ENCODE measurements at regions of chr17 and their contacts with region 1.

Region 1: GRCh38 chr17:70622368-70623260 is 453.3 kb downstream of the KCNJ2 start:
- DNase-seq: peak; percentile 56
- ATAC-seq: no peak
- H3K4me3 Mint-ChIP-seq: no peak overlapping the region
- H3K27ac Mint-ChIP-seq: no peak overlapping the region
- H3K4me1 Mint-ChIP-seq: peaks cover 4% of the 10 kb centered on the region
- H3K27me3 Mint-ChIP-seq: no peaks in the 10 kb centered on the region

Region 2: DNA sequence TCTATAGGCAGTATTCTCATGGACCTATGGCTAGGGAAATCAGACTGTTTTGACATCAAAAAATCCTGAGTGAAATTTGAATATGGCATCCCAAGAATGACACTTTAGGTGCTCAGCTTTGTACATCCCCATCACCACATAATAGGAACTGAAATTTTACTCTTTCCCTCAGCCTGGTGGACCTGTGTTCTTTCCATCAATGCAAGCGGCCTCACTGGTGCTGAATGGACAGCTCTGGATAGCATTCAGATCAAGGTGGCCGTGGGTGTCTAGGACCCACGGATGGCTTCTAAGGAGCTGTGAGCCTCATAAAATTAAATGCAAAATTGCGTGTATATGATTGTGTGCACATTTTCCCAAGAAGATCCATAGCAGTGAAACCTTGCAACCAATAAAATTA is 1055.5 kb before region 1 on chr17:
- CTCF ChIA-PET with region 1: no interaction called
- POLR2A ChIA-PET with region 1: no interaction called
- intact Hi-C with region 1: loop called (anchors 2 to 5 kb)
- DNase-seq: peak; percentile 7
- ATAC-seq: no peak
- H3K4me3 Mint-ChIP-seq: no peak overlapping the region
- H3K27ac Mint-ChIP-seq: no peak overlapping the region
- H3K4me1 Mint-ChIP-seq: peaks cover 3% of the 10 kb centered on the region
- H3K27me3 Mint-ChIP-seq: peaks cover 8% of the 10 kb centered on the region

Region 3: GRCh38 chr17:69574257-69575197 is 1048.1 kb before region 1 on chr17:
- CTCF ChIA-PET with region 1: no interaction called
- POLR2A ChIA-PET with region 1: no interaction called
- intact Hi-C with region 1: loop called (anchors 2 to 5 kb)
- DNase-seq: no peak
- ATAC-seq: no peak
- H3K4me3 Mint-ChIP-seq: no peak overlapping the region
- H3K27ac Mint-ChIP-seq: no peak overlapping the region
- H3K4me1 Mint-ChIP-seq: no peaks in the 10 kb centered on the region
- H3K27me3 Mint-ChIP-seq: peaks cover 16% of the 10 kb centered on the region

Region 4: DNA sequence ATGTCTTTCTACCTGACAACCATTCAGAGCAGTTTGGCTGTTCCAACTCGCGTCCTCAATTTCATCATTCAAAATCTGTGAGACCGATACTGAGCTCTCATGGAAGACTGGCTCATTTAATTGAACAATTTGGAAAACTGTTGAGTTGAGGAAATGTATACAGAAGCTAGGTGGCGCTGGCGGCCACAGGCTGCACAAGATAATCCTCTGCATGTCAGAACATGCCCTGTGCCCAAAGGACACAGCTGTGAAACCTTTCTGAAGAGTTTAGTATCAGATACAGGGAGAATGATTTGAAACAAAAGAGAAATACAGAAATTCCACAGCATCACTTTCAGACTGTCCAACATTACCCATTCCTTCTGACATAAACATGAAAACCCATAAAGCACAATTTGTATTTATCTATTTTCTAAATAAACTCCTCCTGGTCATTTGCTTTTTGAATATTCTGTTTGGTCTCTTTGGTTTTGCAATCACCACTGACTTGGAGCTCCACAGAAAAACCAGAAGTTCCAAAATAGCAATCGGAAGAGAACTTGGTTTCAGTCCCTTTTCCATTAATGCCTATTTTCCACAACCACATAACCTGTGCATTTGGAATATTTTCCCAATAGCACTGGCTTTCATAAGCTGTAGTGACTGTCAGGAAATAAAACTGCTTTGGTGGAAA is 1015.3 kb before region 1 on chr17:
- CTCF ChIA-PET with region 1: no interaction called
- POLR2A ChIA-PET with region 1: no interaction called
- intact Hi-C with region 1: loop called in 1 of 2 experiments (anchors 2 kb)
- DNase-seq: peak; percentile 69
- ATAC-seq: peak; percentile 74
- H3K4me3 Mint-ChIP-seq: no peak overlapping the region
- H3K27ac Mint-ChIP-seq: peak overlapping the region; percentile 25
- H3K4me1 Mint-ChIP-seq: peaks cover 15% of the 10 kb centered on the region
- H3K27me3 Mint-ChIP-seq: peaks cover 3% of the 10 kb centered on the region

Region 5: GRCh38 chr17:70168977-70169708 is 453.5 kb before region 1 on chr17 and contains the start of gene KCNJ2:
- CTCF ChIA-PET with region 1: no interaction called
- POLR2A ChIA-PET with region 1: no interaction called
- intact Hi-C with region 1: loop called in 1 of 2 experiments (anchors 10 kb)
- DNase-seq: peak; percentile 79
- ATAC-seq: peak; percentile 95
- H3K4me3 Mint-ChIP-seq: peak within 1 kb of the TSS; percentile 71
- H3K27ac Mint-ChIP-seq: peak within 1 kb of the TSS; percentile 32
- H3K4me1 Mint-ChIP-seq: peaks cover 14% of the 10 kb centered on the region
- H3K27me3 Mint-ChIP-seq: peaks cover 65% of the 10 kb centered on the region
- total RNA-seq, gene KCNJ2: not detected

Region 6: GRCh38 chr17:70215656-70216055 is 407.0 kb before region 1 on chr17:
- CTCF ChIA-PET with region 1: no interaction called
- POLR2A ChIA-PET with region 1: no interaction called
- intact Hi-C with region 1: no loop called
- DNase-seq: no peak
- ATAC-seq: no peak
- H3K4me3 Mint-ChIP-seq: no peak overlapping the region
- H3K27ac Mint-ChIP-seq: no peak overlapping the region
- H3K4me1 Mint-ChIP-seq: no peaks in the 10 kb centered on the region
- H3K27me3 Mint-ChIP-seq: no peaks in the 10 kb centered on the region